Activated CD4-positive, alpha-beta T cell treated with anti-CD3 and anti-CD28 coated beads for 36 hours (primary cell): ENCODE measurements at regions of chr10 and their contacts with region 1.

Region 1: GRCh38 chr10:104406715-104407650 is 53.4 kb downstream of the CFAP58 start:
- DNase-seq: no peak
- ATAC-seq: no peak
- H3K4me3 Mint-ChIP-seq: no peak overlapping the region
- H3K27ac Mint-ChIP-seq: no peak overlapping the region
- H3K4me1 Mint-ChIP-seq: no peaks in the 10 kb centered on the region
- H3K27me3 Mint-ChIP-seq: peaks cover 14% of the 10 kb centered on the region

Region 2: DNA sequence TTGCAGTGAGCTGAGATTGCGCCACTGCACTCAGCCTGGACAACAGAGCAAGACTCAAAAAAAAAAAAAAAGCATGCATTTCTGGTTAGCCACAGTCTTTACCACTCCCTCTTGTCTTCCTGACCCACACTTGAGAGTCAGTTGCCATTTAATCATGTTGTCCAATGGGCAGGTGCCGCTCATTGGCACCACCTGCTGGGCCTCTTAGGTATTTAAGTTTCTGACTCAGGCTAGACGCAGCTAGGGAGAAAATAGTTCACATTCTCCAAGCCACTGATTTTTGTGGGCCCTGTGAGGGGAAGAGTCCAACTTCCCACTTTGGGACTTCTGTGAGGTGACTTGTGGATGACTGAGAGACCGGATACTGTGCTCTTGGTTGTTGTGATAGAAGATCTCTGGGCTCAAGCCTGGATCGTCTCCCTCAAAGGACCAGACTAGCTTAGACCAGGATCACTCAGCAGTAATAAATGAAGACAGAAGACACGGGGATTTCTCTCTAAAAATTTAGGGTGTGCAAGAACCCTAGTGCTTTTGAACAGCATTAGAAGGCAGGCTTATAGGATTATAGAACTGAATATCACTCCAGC is 207.4 kb after region 1 on chr10:
- CTCF ChIA-PET with region 1: interaction called, 3 read pairs
- POLR2A ChIA-PET with region 1: no interaction called
- intact Hi-C with region 1: loop called in 1 of 2 experiments (anchors 2 kb)
- DNase-seq: peak; percentile 65
- ATAC-seq: peak; percentile 66
- H3K4me3 Mint-ChIP-seq: no peak overlapping the region
- H3K27ac Mint-ChIP-seq: no peak overlapping the region
- H3K4me1 Mint-ChIP-seq: no peaks in the 10 kb centered on the region
- H3K27me3 Mint-ChIP-seq: peaks cover 5% of the 10 kb centered on the region